ENCODE measurements at regions of chr16 and their contacts with region 1.

Region 1: GRCh38 chr16:68310761-68311511 is at the starts of genes PRMT7 and SLC7A6OS:
- DNase-seq: peak; percentile 86 to 94 (median 89)
- ATAC-seq: peak; percentile 96
- H3K4me3 Mint-ChIP-seq: peak within 1 kb of the TSS; percentile 95 to 99 (median 97)
- H3K27ac Mint-ChIP-seq: peak within 1 kb of the TSS; percentile 85 to 98 (median 96)
- H3K4me1 Mint-ChIP-seq: peaks cover 26 to 65% (median 60%) of the 10 kb centered on the region in 4 donors
- H3K27me3 Mint-ChIP-seq: no peaks in the 10 kb centered on the region
- polyA plus RNA-seq, gene PRMT7: 35.7 to 49.9 (median 43.2) TPM
- polyA plus RNA-seq, gene SLC7A6OS: 18.8 to 27.5 (median 23.3) TPM

Region 2: GRCh38 chr16:68244903-68245853 is 65.8 kb before region 1 on chr16 and contains the start of gene PLA2G15:
- POLR2A ChIA-PET with region 1: interaction called, 15 read pairs
- DNase-seq: peak; percentile 93 to 98 (median 96)
- ATAC-seq: peak; percentile 97
- H3K4me3 Mint-ChIP-seq: peak within 1 kb of the TSS; percentile 95 to 99 (median 98)
- H3K27ac Mint-ChIP-seq: peak within 1 kb of the TSS; percentile 77 to 96 (median 92)
- H3K4me1 Mint-ChIP-seq: peaks cover 14 to 39% (median 30%) of the 10 kb centered on the region in 4 donors
- H3K27me3 Mint-ChIP-seq: no peaks in the 10 kb centered on the region
- polyA plus RNA-seq, gene PLA2G15: 2.4 to 9.6 (median 4.6) TPM

Region 3: GRCh38 chr16:68264128-68265077 is 46.5 kb before region 1 on chr16 and contains the start of gene SLC7A6:
- POLR2A ChIA-PET with region 1: interaction called, 1,294 read pairs
- DNase-seq: peak; percentile 69 to 85 (median 82)
- ATAC-seq: peak; percentile 61 to 75
- H3K4me3 Mint-ChIP-seq: peak within 1 kb of the TSS; percentile 93 to 98 (median 96)
- H3K27ac Mint-ChIP-seq: peak within 1 kb of the TSS; percentile 89 to 99 (median 98)
- H3K4me1 Mint-ChIP-seq: peaks cover 35 to 62% (median 57%) of the 10 kb centered on the region in 4 donors
- H3K27me3 Mint-ChIP-seq: no peaks in the 10 kb centered on the region
- polyA plus RNA-seq, gene SLC7A6: 14.3 to 20.2 (median 19.2) TPM

Region 4: GRCh38 chr16:68298907-68299561 is 11.9 kb before region 1 on chr16:
- POLR2A ChIA-PET with region 1: interaction called, 1,294 read pairs
- DNase-seq: peak in 1 of 10 donors; percentile 21
- ATAC-seq: no peak
- H3K4me3 Mint-ChIP-seq: no peak overlapping the region
- H3K27ac Mint-ChIP-seq: peak overlapping the region in 9 of 10 donors; percentile 10 to 82 (median 67)
- H3K4me1 Mint-ChIP-seq: peaks cover 8 to 43% (median 28%) of the 10 kb centered on the region in 4 donors
- H3K27me3 Mint-ChIP-seq: no peaks in the 10 kb centered on the region

Measured in naive thymus-derived CD8-positive, alpha-beta T cell (primary cell).